SK-N-SH (cell line): ENCODE measurements at regions of chr3 and their contacts with region 1.

Region 1: DNA sequence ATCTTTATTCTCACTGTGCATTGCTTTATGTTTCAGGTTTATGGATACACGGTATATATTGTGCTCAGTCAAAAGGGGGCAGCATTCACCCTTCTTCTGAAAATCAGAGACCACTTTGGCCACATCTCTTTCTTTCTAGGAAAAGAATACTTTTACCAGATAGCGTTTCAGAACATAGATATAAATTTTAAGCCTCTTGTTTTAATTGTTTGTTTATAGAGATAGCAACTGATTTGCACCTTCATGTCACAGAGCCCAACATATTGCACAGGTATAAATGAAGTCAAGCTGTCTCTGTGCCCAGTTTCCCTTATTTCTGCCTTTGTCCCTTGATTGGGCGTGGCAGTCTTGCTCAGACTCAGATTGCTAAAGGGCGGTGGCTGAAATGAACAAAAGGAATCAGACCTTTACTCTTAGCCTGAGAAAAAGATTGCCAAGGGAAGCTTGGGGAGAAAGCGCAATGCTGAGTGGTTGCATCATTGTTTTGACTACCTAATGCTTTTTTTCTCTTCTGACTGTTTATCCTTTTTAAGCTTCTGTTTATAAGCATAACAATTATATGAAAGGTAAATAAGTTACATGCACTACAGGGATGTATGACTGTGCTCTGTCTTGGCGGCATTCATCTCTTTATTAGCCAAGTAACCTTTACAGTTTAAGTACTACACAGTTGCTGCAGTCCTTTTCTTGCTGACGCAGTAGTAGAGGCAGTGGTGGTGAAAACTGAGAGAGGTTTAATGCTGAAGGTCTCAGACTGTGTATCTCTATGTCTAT is 70.8 kb upstream of the ZBTB20 start:
- DNase-seq: peak; percentile 35
- H3K4me3 ChIP-seq: peak overlapping the region in 1 of 2 experiments; percentile 20; a peak in 1 of 4 replicates
- H3K27ac ChIP-seq: peak overlapping the region; percentile 22 to 53; a peak in 3 of 4 replicates
- H3K4me1 ChIP-seq: peaks cover 3 to 15% of the 10 kb centered on the region in 2 experiments; a peak in 3 of 4 replicates
- H3K27me3 ChIP-seq: no peaks in the 10 kb centered on the region
- CTCF ChIP-seq: peak; percentile 89
- EP300 ChIP-seq: no peak; a peak in 1 of 4 replicates
- RAD21 ChIP-seq: peak; percentile 98

Region 2: DNA sequence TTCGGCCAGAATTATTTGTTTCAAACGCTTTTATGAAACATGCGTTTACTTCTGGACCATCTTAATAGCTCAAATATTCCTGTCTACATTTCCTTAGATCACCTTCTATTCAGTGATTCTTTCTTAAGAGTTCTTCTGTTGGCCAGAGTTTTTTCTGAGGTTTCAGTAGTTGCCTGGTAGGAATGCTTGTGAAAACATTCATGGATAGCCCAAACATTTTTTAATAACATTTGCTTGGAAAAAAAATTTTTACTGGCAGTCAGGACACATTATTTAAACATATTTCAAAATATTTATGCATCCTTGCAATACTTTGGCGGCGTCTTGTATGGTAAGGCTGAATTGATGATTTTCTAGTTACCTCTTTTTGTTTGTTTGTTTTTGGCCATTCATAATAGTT is 23.4 kb before region 1 on chr3:
- CTCF ChIA-PET with region 1: no interaction called
- POLR2A ChIA-PET with region 1: no interaction called
- DNase-seq: no peak
- H3K4me3 ChIP-seq: no peak overlapping the region
- H3K27ac ChIP-seq: no peak overlapping the region
- H3K4me1 ChIP-seq: no peaks in the 10 kb centered on the region
- H3K27me3 ChIP-seq: no peaks in the 10 kb centered on the region
- CTCF ChIP-seq: no peak
- EP300 ChIP-seq: no peak
- RAD21 ChIP-seq: no peak

Region 3: DNA sequence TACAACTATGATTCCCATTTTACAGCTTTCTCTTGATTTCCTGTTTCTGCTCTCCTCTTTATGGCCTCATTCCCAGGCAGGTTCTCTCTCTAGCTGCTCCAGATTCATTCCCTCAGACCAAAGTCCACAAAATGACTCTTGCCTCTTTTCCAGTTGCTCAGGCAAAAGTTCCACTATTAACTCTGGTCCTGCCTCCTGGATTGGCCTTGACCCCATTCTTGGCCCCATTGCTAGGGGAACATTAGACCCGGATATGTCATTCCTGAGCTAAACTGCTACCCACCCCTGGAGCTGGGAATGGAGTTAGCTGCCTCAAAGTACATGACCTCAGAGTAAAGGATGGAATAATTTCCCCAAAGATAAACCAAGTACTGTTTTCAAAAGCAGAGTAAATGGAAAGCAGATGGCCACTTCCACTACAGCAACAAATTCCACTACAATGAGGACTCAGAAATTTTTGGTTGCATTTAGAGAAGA is 332.5 kb after region 1 on chr3:
- CTCF ChIA-PET with region 1: interaction called, 12 read pairs
- POLR2A ChIA-PET with region 1: no interaction called
- DNase-seq: no peak
- H3K4me3 ChIP-seq: no peak overlapping the region
- H3K27ac ChIP-seq: peak overlapping the region; percentile 92 to 95
- H3K4me1 ChIP-seq: peaks cover 8 to 36% of the 10 kb centered on the region in 2 experiments; a peak in 2 of 4 replicates
- H3K27me3 ChIP-seq: no peaks in the 10 kb centered on the region
- CTCF ChIP-seq: no peak
- EP300 ChIP-seq: peak; percentile 44 to 60; a peak in 2 of 4 replicates
- RAD21 ChIP-seq: no peak

Region 4: GRCh38 chr3:115623044-115623868 is 405.4 kb after region 1 on chr3 and contains the start of gene GAP43:
- CTCF ChIA-PET with region 1: interaction called, 15 read pairs
- POLR2A ChIA-PET with region 1: no interaction called
- DNase-seq: peak; percentile 51
- H3K4me3 ChIP-seq: peak within 1 kb of the TSS; percentile 49 to 63
- H3K27ac ChIP-seq: peak within 1 kb of the TSS in 1 of 2 experiments; percentile 56; a peak in 1 of 4 replicates
- H3K4me1 ChIP-seq: peaks cover 10 to 11% of the 10 kb centered on the region in 2 experiments; a peak in 3 of 4 replicates
- H3K27me3 ChIP-seq: no peaks in the 10 kb centered on the region
- CTCF ChIP-seq: no peak; the same call in 1 of the 2 replicates
- EP300 ChIP-seq: no peak
- RAD21 ChIP-seq: peak; percentile 38
- polyA plus RNA-seq, gene GAP43: 13.6 and 14.0 TPM in 2 replicates

Region 5: DNA sequence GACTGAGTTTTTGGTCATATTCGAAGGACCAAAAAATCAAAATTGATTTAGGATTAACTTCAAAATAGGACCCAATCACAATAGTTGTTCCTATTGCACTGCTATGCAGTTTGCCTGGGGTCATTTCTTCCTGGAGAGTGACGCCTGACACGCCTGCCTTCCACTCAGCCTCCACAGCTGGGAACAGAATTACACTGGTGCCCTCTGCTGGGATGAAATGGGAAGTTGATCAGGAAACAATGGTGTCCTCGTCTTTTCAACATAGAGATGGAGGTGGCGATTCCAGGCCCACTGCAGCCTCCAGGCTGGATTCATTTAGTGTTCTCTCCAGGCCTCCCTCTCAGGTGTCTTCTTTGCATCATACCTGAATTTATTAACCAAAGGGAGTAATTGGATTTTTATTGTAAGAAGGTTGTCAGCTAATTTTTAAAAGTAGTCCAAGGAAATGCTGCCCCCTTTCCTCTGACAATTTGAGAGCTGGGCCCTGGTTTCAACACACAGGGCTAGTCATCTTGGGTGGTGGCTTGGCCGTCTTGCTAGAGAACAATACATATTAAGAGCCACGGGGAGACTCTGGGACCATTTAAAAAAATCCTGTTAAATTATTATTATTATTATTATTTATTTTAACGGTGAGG is 475.1 kb after region 1 on chr3:
- CTCF ChIA-PET with region 1: interaction called, 75 read pairs
- POLR2A ChIA-PET with region 1: interaction called, 6 read pairs
- DNase-seq: peak; percentile 74
- H3K4me3 ChIP-seq: peak overlapping the region in 1 of 2 experiments; percentile 36; a peak in 1 of 4 replicates
- H3K27ac ChIP-seq: peak overlapping the region; percentile 5 to 98; a peak in 3 of 4 replicates
- H3K4me1 ChIP-seq: peaks cover 0 to 16% of the 10 kb centered on the region in 2 experiments; a peak in 3 of 4 replicates
- H3K27me3 ChIP-seq: no peaks in the 10 kb centered on the region
- CTCF ChIP-seq: peak; percentile 86
- EP300 ChIP-seq: peak in 1 of 2 experiments; percentile 6; a peak in 1 of 4 replicates
- RAD21 ChIP-seq: peak; percentile 99

Region 6: DNA sequence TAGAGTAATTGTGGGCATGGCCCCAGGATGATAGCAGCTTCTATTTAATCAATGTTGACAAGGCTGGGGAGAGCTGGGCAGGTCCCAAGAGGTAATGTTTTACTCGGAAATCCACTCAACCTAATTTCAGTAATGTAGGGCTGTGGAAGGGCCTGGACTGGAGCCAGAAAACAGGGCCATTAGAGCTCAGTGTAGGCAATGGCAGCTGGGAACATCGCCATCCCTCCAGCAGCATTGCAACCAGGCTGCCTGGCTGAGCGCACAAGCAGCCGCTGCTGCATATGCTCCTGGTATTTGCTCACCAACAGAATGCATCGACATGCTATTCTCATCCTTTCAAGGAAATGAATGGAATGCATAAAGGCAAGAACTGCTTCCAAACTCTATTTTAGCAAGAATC is 495.4 kb after region 1 on chr3:
- CTCF ChIA-PET with region 1: interaction called, 11 read pairs
- POLR2A ChIA-PET with region 1: no interaction called
- DNase-seq: peak; percentile 73
- H3K4me3 ChIP-seq: 0 out of 4 replicates have a peak overlapping the region, but pooled peaks of 1 of the 2 experiments have one; percentile 3
- H3K27ac ChIP-seq: peak overlapping the region; percentile 63 to 99
- H3K4me1 ChIP-seq: peaks cover 34 to 53% of the 10 kb centered on the region in 2 experiments; a peak in 3 of 4 replicates
- H3K27me3 ChIP-seq: no peaks in the 10 kb centered on the region
- CTCF ChIP-seq: no peak
- EP300 ChIP-seq: peak in 1 of 2 experiments; percentile 82; a peak in 2 of 4 replicates
- RAD21 ChIP-seq: peak; percentile 37

Region 7: DNA sequence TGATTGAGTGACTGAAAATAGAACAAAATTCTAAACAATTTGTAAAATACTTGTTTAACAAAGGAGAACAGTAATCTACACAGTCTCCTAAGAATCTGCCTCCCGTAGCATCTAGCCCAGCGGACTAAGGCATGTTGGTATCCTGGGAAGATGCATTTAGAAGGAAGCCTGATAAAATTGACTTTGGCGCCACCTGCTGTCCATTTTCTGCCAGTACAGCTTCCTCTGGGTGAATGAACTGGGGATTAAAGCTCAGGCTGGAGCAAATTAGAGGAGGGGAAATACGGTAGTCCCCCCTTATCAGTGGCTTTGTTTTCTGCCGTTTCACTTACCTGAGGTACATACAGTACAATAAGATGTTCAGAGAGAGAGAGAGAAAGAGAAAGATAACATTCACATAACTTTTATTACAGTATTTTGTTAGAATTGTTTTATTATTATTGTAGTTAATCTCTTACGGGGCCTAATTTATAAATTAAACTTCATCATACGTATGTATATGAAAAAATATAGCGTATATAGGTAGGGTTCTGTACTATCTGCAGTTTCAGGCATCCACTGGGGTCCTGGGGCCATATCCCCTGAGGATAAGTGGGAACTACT is 597.0 kb after region 1 on chr3:
- CTCF ChIA-PET with region 1: interaction called, 20 read pairs
- POLR2A ChIA-PET with region 1: no interaction called
- DNase-seq: peak; percentile 68
- H3K4me3 ChIP-seq: no peak overlapping the region; a peak in 1 of 4 replicates
- H3K27ac ChIP-seq: no peak overlapping the region
- H3K4me1 ChIP-seq: no peaks in the 10 kb centered on the region
- H3K27me3 ChIP-seq: no peaks in the 10 kb centered on the region
- CTCF ChIP-seq: peak; percentile 95
- EP300 ChIP-seq: no peak
- RAD21 ChIP-seq: peak; percentile 91

Region 8: DNA sequence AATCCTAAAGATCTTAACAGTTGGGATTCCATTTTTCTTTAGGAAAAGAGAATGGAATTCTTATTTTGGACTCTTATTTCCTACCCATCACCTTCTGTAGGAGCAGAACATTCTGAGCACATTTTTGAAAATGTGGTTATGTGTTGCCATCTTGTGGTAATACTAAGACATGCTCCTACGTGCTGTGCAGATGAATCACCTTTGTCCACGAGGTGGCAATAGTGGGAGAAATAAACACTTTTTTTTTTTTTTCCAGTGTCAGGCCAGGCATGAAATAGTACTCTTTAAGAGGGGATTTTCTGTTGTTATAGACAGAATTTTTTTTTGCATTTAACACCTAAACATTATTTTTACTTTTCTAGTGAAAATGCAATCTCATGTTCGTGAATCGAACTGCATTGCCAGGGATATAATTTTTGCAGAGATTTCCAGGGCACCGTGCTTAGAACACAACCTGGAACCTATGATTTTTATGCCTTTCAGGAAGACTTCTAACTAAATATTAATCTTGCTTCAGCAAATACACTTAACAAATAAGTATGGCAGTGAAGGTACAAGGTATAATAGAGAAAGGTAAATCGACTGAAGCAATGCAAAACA is 602.0 kb after region 1 on chr3:
- CTCF ChIA-PET with region 1: interaction called, 20 read pairs
- POLR2A ChIA-PET with region 1: no interaction called
- DNase-seq: peak; percentile 57
- H3K4me3 ChIP-seq: no peak overlapping the region; a peak in 1 of 4 replicates
- H3K27ac ChIP-seq: no peak overlapping the region
- H3K4me1 ChIP-seq: peaks cover 0 to 2% of the 10 kb centered on the region in 2 experiments; a peak in 2 of 4 replicates
- H3K27me3 ChIP-seq: no peaks in the 10 kb centered on the region
- CTCF ChIP-seq: peak; percentile 100
- EP300 ChIP-seq: no peak
- RAD21 ChIP-seq: peak; percentile 91